Aorta (tissue), 5 donors: ENCODE measurements at regions of chr17 and their contacts with region 1.

Region 1: DNA sequence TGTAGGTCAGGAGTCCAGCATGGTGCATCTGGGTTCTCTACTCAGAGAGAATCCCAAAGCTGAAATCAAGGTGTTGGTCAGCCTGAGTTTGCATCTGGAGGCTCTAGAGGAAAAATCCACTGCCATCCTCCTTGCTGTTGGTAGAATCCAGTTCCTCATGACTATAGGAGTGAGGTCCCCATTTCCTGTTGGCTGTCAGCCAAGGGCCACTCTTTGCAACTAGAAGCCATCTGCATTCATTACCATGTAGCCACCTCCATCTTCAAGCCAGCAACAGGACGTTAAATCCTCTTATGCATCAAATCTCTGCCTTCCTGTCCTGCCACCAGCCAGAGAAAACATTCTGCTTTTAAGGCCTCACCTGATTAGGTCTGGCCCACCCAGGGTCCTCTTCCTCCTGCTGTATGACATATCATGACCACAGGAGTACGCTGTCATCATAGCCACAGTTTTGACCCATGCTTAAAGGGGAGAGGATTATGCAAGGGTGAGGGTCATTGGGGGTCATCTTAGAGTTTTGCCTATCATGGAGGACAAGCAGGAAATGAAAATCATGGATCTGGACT is 40.5 kb downstream of the DNAH9 start:
- DNase-seq: no peak
- ATAC-seq: no peak
- H3K4me3 ChIP-seq: no peak overlapping the region
- H3K27ac ChIP-seq: no peak overlapping the region
- H3K4me1 ChIP-seq: no peaks in the 10 kb centered on the region
- H3K27me3 ChIP-seq: peaks cover 0 to 1% of the 10 kb centered on the region in 2 donors

Region 2: DNA sequence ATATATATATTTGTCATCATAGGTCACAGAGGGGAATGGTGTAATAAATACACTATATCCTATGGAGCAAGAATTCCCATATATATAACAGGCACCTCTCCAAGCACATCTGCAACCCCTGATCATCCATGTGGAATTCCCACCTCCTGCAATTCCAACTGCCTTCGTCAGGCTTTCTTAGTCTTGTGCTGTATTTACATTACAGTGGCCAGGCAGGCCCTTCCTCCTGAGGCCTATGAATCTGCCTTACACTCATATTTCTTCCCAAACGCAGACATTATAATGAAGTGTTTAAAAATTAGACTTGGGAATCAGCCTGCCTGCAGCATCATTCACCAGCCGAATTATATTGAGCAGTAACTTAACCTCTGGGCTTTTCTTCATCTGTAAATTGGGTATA is 59.8 kb before region 1 on chr17:
- intact Hi-C with region 1: loop called in 1 of 2 experiments (anchors 10 kb)
- DNase-seq: no peak
- ATAC-seq: no peak
- H3K4me3 ChIP-seq: no peak overlapping the region
- H3K27ac ChIP-seq: no peak overlapping the region
- H3K4me1 ChIP-seq: no peaks in the 10 kb centered on the region
- H3K27me3 ChIP-seq: no peaks in the 10 kb centered on the region